ENCODE measurements at regions of chr12 and their contacts with region 1.

Region 1: GRCh38 chr12:80802652-80803400 is 86.1 kb downstream of the MYF5 start:
- DNase-seq: no peak
- H3K4me3 ChIP-seq: no peak overlapping the region
- H3K4me3 Mint-ChIP-seq: no peak overlapping the region
- H3K27ac ChIP-seq: no peak overlapping the region
- H3K27ac Mint-ChIP-seq: no peak overlapping the region
- H3K4me1 ChIP-seq: no peaks in the 10 kb centered on the region
- H3K4me1 Mint-ChIP-seq: no peaks in the 10 kb centered on the region
- H3K27me3 ChIP-seq: no peaks in the 10 kb centered on the region
- H3K27me3 Mint-ChIP-seq: no peaks in the 10 kb centered on the region

Region 2: DNA sequence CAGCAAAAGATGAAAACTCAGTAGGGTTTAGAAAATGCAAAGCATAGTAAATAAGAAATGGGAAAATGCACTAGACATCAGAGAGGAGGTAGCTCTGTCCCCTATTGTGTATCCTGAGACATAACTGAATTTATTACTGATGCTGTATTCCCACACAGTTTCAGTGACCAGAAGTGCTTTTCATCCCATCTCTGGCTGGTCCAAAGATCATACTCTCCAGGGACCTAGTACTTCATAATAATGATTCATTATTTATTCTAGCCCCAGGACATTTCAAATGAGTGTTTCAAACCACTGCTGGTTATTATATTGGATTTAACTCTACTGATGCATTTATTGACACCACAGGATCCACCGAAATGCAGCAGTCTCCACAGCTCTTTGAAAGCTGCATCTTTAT is 1275.4 kb before region 1 on chr12:
- CTCF ChIA-PET with region 1: no interaction called
- POLR2A ChIA-PET with region 1: no interaction called
- intact Hi-C with region 1: loop called (anchors 5 kb)
- DNase-seq: no peak
- H3K4me3 ChIP-seq: no peak overlapping the region
- H3K4me3 Mint-ChIP-seq: no peak overlapping the region
- H3K27ac ChIP-seq: no peak overlapping the region
- H3K27ac Mint-ChIP-seq: no peak overlapping the region
- H3K4me1 ChIP-seq: no peaks in the 10 kb centered on the region
- H3K4me1 Mint-ChIP-seq: no peaks in the 10 kb centered on the region
- H3K27me3 ChIP-seq: no peaks in the 10 kb centered on the region
- H3K27me3 Mint-ChIP-seq: peaks cover 0 to 1% of the 10 kb centered on the region in 2 donors

Region 3: DNA sequence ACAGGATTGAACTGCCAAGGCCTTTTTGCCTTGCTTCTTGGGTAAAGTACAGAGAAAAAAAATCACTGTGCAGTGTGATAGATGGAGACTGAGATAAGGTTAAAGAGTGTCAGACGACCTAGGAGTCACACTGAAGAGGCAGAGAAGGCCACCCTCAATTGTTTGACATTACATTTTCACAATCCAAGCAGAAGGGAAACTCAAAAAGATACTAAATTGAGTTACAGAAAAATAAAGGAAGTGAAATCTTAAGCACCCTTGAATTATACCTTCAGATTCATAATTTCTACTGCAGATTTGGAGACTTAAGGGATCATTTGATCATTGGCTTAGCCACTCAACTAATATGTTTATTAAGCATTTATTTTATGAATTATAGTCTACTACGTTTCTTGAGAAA is 11.0 kb after region 1 on chr12:
- CTCF ChIA-PET with region 1: no interaction called
- POLR2A ChIA-PET with region 1: no interaction called
- intact Hi-C with region 1: no loop called
- DNase-seq: no peak
- H3K4me3 ChIP-seq: no peak overlapping the region
- H3K4me3 Mint-ChIP-seq: no peak overlapping the region
- H3K27ac ChIP-seq: no peak overlapping the region
- H3K27ac Mint-ChIP-seq: no peak overlapping the region
- H3K4me1 ChIP-seq: no peaks in the 10 kb centered on the region
- H3K4me1 Mint-ChIP-seq: no peaks in the 10 kb centered on the region
- H3K27me3 ChIP-seq: no peaks in the 10 kb centered on the region
- H3K27me3 Mint-ChIP-seq: no peaks in the 10 kb centered on the region